Esophagus squamous epithelium (tissue), 5 donors: ENCODE measurements at regions of chr4 and their contacts with region 1.

Region 1: GRCh38 chr4:137819964-137820383 is 287.7 kb upstream of the PCDH18 start:
- DNase-seq: no peak
- H3K4me3 ChIP-seq: no peak overlapping the region
- H3K27ac ChIP-seq: no peak overlapping the region
- H3K4me1 ChIP-seq: no peaks in the 10 kb centered on the region
- H3K27me3 ChIP-seq: no peaks in the 10 kb centered on the region
- CTCF ChIP-seq: peak in 5 of 6 experiments; percentile 28 to 73 (median 50)
- POLR2A ChIP-seq: no peak

Region 2: GRCh38 chr4:137635108-137635507 is 184.9 kb before region 1 on chr4:
- intact Hi-C with region 1: no loop called
- DNase-seq: no peak
- H3K4me3 ChIP-seq: no peak overlapping the region
- H3K27ac ChIP-seq: no peak overlapping the region
- H3K4me1 ChIP-seq: peaks cover 0 to 3% (median 0%) of the 10 kb centered on the region in 3 donors
- H3K27me3 ChIP-seq: no peaks in the 10 kb centered on the region
- CTCF ChIP-seq: no peak
- POLR2A ChIP-seq: no peak

Region 3: DNA sequence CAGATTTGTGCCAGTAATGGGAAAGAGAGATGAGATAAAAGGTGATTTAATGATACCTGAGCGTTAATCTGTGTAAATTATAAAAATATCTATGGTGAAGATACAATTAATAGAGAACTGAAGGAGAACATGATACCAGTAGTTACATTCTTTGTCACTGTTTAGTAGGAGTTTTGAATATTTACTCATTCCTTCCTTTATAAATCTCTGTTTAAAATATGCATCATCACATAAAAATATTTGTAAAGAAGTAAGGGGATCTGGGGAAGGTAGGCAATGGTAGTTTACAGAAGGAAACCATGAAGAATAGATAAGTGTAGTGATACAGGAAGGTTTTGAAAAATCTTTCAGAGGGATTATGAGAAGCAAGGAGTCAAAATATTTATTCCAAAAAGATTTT is 97.1 kb before region 1 on chr4:
- intact Hi-C with region 1: no loop called
- DNase-seq: no peak
- H3K4me3 ChIP-seq: no peak overlapping the region
- H3K27ac ChIP-seq: no peak overlapping the region
- H3K4me1 ChIP-seq: no peaks in the 10 kb centered on the region
- H3K27me3 ChIP-seq: no peaks in the 10 kb centered on the region
- CTCF ChIP-seq: no peak
- POLR2A ChIP-seq: no peak

Region 4: DNA sequence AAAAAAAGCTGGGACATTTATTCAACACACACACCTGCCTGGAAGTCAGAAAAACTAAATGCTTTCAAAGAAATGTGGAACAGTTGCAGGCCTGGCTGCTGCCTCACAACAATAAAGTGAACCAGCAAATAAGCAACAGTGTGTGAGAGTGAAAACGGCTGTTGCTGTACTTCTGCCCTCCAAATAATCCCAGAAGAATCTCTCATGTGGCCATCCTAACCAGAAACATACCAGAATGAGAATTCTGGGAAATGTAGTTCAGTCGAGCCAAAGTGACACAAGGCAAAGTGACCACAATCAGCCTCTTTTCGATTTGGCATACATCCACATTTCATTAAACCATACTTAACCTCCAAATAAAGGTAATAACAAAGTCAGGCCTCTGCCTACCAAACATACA is 217.7 kb after region 1 on chr4:
- intact Hi-C with region 1: no loop called
- DNase-seq: no peak
- H3K4me3 ChIP-seq: no peak overlapping the region
- H3K27ac ChIP-seq: no peak overlapping the region
- H3K4me1 ChIP-seq: peaks cover 0 to 34% (median 10%) of the 10 kb centered on the region in 3 donors
- H3K27me3 ChIP-seq: no peaks in the 10 kb centered on the region
- CTCF ChIP-seq: no peak
- POLR2A ChIP-seq: no peak

Region 5: GRCh38 chr4:138090150-138090917 is 270.4 kb after region 1 on chr4:
- intact Hi-C with region 1: loop called (anchors 10 kb)
- DNase-seq: no peak
- H3K4me3 ChIP-seq: peak overlapping the region in 3 of 4 donors; percentile 32 to 47 (median 34)
- H3K27ac ChIP-seq: no peak overlapping the region
- H3K4me1 ChIP-seq: peaks cover 0 to 29% (median 11%) of the 10 kb centered on the region in 3 donors
- H3K27me3 ChIP-seq: no peaks in the 10 kb centered on the region
- CTCF ChIP-seq: peak; percentile 67 to 81 (median 78)
- POLR2A ChIP-seq: no peak

Region 6: DNA sequence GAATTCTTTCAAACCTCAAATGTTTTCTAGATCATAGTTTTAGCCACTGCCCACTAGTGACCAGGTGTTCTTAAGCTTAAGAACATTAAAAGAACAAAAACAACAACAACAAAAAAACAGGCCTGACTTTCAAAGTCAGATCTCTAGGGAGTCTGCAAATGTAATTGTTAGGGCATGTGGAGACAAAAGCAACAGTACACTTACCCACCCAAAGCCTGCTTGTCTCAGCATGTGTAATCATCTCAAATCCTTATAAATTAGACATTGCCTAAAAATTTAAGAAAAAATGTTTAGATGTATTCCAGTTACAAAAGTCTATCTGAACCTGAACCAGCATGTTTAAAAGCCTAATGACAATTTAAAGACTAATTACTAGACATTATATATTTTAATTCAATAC is 342.3 kb after region 1 on chr4:
- intact Hi-C with region 1: loop called (anchors 5 kb)
- DNase-seq: no peak
- H3K4me3 ChIP-seq: no peak overlapping the region
- H3K27ac ChIP-seq: peak overlapping the region in 1 of 4 donors; percentile 4
- H3K4me1 ChIP-seq: peaks cover 0 to 9% (median 0%) of the 10 kb centered on the region in 3 donors
- H3K27me3 ChIP-seq: no peaks in the 10 kb centered on the region
- CTCF ChIP-seq: no peak
- POLR2A ChIP-seq: no peak